A549 (cell line): ENCODE measurements at regions of chr11 and their contacts with region 1.

Region 1: DNA sequence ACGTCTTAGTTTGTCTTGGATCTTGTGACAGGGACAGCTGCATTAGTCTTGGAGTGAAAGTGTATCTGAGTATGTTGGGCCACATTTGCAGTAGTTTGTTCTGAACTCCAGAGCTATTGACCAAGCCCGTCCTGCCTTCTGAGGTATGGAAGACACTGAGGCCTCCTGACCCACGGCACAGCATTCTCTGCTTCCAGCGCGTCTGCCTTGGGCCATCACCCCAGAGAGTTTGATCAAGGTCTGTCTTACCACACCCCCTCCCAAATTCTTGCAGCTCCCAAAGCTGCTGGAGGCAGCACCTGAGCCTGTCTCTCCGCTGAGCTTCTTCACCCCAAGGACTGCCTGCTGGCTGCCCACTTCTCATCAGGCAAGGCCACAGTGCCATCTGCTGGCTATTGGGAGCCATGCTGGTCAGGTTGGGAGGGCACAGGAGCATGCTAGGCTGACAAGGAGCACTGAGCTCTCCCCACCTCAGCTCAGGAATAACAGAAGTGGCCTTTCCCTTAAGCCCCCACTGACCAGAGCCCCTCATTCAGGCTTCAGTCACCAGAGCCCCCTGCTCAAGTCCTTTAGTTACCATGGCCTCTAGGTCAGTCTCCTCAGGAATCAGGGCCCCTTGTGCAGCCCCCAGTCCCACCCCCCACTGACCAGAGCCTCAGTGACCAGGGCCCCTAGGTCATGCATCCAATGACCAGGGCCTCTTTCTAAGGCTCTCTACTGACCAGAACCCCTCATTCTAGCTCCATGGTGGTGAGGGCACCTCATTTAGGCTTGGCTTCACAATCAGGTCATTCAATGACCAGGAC is 27.2 kb upstream of the SMPD1 start:
- DNase-seq: peak; percentile 81 to 82
- ATAC-seq: peak; percentile 95 to 99
- H3K4me3 ChIP-seq: no peak overlapping the region
- H3K27ac ChIP-seq: no peak overlapping the region
- H3K4me1 ChIP-seq: peaks cover 10% of the 10 kb centered on the region; the same call in 2 of the 3 replicates
- CTCF ChIP-seq: peak; percentile 81
- EP300 ChIP-seq: no peak
- POLR2A ChIP-seq: no peak
- RAD21 ChIP-seq: peak; percentile 79 to 87

Region 2: DNA sequence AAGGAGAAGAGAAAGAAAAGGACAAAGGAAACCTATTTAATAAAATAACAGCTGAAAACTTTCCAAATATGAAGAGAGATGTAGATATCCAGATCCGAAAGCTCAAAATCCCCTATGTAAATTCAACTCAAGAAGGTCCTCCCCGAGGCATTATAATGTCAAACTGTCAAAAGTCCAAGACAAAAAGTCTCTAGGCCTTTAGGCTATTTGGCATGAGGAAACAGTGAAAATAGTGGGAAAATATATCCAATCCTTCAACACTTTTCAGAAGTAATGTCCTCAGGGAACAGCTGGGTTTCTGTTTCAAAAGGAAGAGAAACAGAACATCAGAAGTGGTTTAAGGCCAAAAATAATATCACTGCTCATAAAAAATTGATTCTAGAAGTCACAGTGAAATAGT is 484.5 kb before region 1 on chr11:
- CTCF ChIA-PET with region 1: no interaction called
- POLR2A ChIA-PET with region 1: no interaction called
- DNase-seq: no peak
- ATAC-seq: no peak
- H3K4me3 ChIP-seq: no peak overlapping the region
- H3K27ac ChIP-seq: no peak overlapping the region
- H3K4me1 ChIP-seq: no peaks in the 10 kb centered on the region
- CTCF ChIP-seq: no peak
- EP300 ChIP-seq: no peak
- POLR2A ChIP-seq: no peak
- RAD21 ChIP-seq: no peak

Region 3: DNA sequence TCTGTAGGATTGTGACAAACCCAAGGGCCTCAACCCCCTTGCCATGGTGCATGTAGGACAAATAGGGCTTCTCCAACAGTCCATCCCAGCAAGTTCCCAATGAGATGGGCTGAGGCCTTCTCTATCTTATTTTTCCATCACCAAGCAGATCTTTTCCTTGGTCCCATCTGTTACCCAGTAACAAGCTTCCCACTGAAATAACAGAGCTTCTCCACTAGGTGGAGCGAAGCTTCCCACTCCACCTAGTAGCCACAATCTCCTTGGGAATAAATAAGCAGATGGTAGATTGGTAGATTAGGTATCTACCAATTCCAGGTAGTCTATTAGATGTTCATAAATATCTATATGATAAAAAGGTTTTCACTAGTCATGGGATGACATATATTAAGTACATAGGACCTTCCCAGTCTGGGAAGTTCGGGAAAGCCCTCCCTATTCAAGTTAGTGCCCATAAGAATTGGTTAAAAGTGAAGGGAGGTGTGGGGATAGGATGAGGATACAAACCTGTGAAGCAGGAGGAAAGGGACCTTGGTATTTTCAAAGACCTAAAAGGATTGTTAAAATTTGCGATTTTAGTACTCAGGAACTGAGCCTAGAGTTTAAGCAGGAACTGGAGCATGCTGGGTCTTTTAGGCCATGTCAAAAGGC is 370.3 kb before region 1 on chr11:
- CTCF ChIA-PET with region 1: interaction called, 19 read pairs
- POLR2A ChIA-PET with region 1: no interaction called
- DNase-seq: peak; percentile 37 to 43
- ATAC-seq: peak in 1 of 2 experiments; percentile 83; a peak in 4 of 6 replicates
- H3K4me3 ChIP-seq: no peak overlapping the region
- H3K27ac ChIP-seq: no peak overlapping the region
- H3K4me1 ChIP-seq: no peaks in the 10 kb centered on the region
- CTCF ChIP-seq: peak; percentile 37; the same call in 2 of the 3 replicates
- EP300 ChIP-seq: no peak
- POLR2A ChIP-seq: no peak
- RAD21 ChIP-seq: peak in 1 of 2 experiments; percentile 19; a peak in 1 of 5 replicates

Region 4: GRCh38 chr11:6251120-6251733 is 111.8 kb before region 1 on chr11:
- CTCF ChIA-PET with region 1: interaction called, 24 read pairs
- POLR2A ChIA-PET with region 1: no interaction called
- DNase-seq: peak; percentile 74 to 82
- ATAC-seq: peak; percentile 95 to 98
- H3K4me3 ChIP-seq: no peak overlapping the region
- H3K27ac ChIP-seq: no peak overlapping the region
- H3K4me1 ChIP-seq: peaks cover 9% of the 10 kb centered on the region; the same call in 2 of the 3 replicates
- CTCF ChIP-seq: peak; percentile 60
- EP300 ChIP-seq: no peak
- POLR2A ChIP-seq: no peak
- RAD21 ChIP-seq: peak; percentile 41 to 62; a peak in 2 of 5 replicates

Region 5: DNA sequence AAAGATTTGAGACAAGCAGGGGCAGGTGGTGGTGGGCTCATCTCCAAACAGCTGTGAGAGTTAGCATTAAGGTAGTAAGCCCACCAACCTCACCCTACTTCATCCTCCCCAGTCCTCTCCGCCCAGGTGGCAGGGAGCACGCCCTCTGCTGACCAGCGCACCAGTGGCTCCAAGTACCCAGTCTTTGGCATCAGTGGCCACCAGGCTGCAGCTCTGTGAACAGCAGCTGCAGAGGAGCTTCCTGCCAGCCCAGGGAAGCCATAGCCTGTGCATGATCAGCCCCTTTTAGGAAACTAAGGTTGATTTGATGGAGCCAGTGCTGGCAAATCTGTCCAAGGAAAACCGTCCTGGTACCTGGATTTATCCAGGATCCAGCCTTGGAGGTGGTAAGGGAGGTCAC is 64.5 kb before region 1 on chr11:
- CTCF ChIA-PET with region 1: interaction called, 22 read pairs
- POLR2A ChIA-PET with region 1: no interaction called
- DNase-seq: peak; percentile 50 to 72
- ATAC-seq: peak; percentile 99 to 100
- H3K4me3 ChIP-seq: no peak overlapping the region
- H3K27ac ChIP-seq: no peak overlapping the region
- H3K4me1 ChIP-seq: no peaks in the 10 kb centered on the region
- CTCF ChIP-seq: peak; percentile 50
- EP300 ChIP-seq: no peak
- POLR2A ChIP-seq: no peak
- RAD21 ChIP-seq: peak; percentile 32 to 37; a peak in 4 of 5 replicates

Region 6: GRCh38 chr11:6321961-6322362 is 41.1 kb before region 1 on chr11:
- CTCF ChIA-PET with region 1: interaction called, 34 read pairs
- POLR2A ChIA-PET with region 1: interaction called, 3 read pairs
- DNase-seq: no peak
- ATAC-seq: no peak
- H3K4me3 ChIP-seq: no peak overlapping the region
- H3K27ac ChIP-seq: no peak overlapping the region
- H3K4me1 ChIP-seq: peaks cover 15% of the 10 kb centered on the region; the same call in 2 of the 3 replicates
- CTCF ChIP-seq: no peak
- EP300 ChIP-seq: no peak
- POLR2A ChIP-seq: no peak
- RAD21 ChIP-seq: no peak